Dorsolateral prefrontal cortex (tissue), 120 donors: ENCODE measurements at regions of chr11 and their contacts with region 1.

Region 1: GRCh38 chr11:9265211-9266131 is at the start of gene DENND5A:
- DNase-seq: peak; percentile 76 to 92 (median 85)
- H3K4me3 ChIP-seq: peak within 1 kb of the TSS; percentile 67 to 100 (median 92)
- H3K27ac ChIP-seq: peak within 1 kb of the TSS; percentile 73 to 98 (median 96)
- H3K27me3 ChIP-seq: no peaks in the 10 kb centered on the region
- CTCF ChIP-seq: peak in 38 of 56 donors; percentile 3 to 61 (median 40)
- total RNA-seq, gene DENND5A: 128 to 331 (median 174) TPM

Region 2: DNA sequence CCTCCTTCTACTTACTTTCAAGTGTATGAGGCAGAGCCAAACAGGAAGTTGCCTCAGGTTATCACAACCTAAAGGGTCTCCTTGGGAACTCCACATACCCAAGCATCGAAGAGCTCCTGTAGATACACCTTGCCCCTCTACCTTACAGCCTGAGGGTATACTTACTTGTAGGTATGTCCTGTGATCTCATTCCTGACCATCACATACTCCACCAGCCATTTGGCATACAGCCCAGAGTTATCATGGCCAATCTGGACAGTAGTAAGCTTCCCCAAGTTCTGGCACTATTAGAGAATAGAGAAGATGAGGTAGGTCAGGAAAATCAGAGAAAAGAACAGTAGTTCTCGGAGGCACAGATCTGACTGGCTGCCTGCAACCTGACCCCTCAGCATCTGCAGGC is 120.6 kb before region 1 on chr11:
- intact Hi-C with region 1: loop called in 1 of 2 experiments (anchors 5 kb)
- DNase-seq: peak in 1 of 10 donors; percentile 71
- H3K4me3 ChIP-seq: no peak overlapping the region
- H3K27ac ChIP-seq: peak overlapping the region in 45 of 59 donors; percentile 0 to 93 (median 77)
- H3K27me3 ChIP-seq: no peaks in the 10 kb centered on the region
- CTCF ChIP-seq: no peak

Region 3: GRCh38 chr11:9203691-9204311 is 61.7 kb before region 1 on chr11:
- intact Hi-C with region 1: loop called in 1 of 2 experiments (anchors 2 kb)
- DNase-seq: peak in 5 of 10 donors; percentile 14 to 70 (median 41)
- H3K4me3 ChIP-seq: peak overlapping the region in 1 of 59 donors; percentile 17
- H3K27ac ChIP-seq: peak overlapping the region in 51 of 59 donors; percentile 4 to 85 (median 60)
- H3K27me3 ChIP-seq: no peaks in the 10 kb centered on the region
- CTCF ChIP-seq: peak in 53 of 56 donors; percentile 17 to 67 (median 48)

Region 4: DNA sequence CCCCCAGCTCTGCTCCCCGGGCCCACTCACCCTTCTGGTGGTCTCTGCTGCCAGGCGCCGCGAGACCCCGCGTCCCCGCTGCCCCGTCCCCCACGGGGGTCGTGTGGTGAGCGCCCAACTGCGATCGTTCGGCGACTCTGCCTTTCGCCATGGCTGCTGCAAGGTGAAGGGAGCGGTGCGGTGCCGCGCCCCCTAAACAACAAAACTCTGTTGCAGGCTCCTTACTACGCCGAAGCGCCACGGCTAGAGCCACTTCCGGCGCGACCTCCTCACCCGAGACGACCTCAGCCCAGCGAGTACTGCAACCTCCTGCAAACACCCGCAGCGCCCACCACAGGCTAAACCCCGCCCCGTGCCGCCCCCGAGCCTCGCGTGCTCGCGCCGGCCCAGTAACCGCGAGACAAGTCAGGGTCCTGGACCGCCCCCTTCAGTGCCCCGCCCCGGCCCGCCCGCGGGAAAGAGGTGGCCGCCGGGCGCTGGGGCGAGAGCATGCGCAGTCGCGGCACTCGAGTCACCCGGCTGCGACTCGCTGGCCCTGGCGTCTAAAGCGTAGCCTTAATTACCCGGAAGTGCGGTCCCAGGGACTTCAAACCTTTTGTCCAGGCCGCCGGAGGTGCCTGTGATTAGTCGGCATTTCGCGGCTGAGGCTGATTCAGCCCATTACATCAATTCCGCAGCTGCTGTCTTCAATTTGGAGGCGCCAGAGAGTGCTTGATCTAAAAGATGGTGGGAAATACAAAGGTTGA is 49.0 kb after region 1 on chr11 and contains the start of gene TMEM41B:
- intact Hi-C with region 1: loop called (anchors 5 kb)
- DNase-seq: peak; percentile 91 to 99 (median 96)
- H3K4me3 ChIP-seq: peak within 1 kb of the TSS; percentile 67 to 100 (median 95)
- H3K27ac ChIP-seq: peak within 1 kb of the TSS; percentile 44 to 97 (median 90)
- H3K27me3 ChIP-seq: peaks cover 0 to 11% (median 0%) of the 10 kb centered on the region in 45 donors
- CTCF ChIP-seq: peak in 51 of 56 donors; percentile 1 to 67 (median 41)
- total RNA-seq, gene TMEM41B: 31.7 to 63.9 (median 42.1) TPM

Region 5: DNA sequence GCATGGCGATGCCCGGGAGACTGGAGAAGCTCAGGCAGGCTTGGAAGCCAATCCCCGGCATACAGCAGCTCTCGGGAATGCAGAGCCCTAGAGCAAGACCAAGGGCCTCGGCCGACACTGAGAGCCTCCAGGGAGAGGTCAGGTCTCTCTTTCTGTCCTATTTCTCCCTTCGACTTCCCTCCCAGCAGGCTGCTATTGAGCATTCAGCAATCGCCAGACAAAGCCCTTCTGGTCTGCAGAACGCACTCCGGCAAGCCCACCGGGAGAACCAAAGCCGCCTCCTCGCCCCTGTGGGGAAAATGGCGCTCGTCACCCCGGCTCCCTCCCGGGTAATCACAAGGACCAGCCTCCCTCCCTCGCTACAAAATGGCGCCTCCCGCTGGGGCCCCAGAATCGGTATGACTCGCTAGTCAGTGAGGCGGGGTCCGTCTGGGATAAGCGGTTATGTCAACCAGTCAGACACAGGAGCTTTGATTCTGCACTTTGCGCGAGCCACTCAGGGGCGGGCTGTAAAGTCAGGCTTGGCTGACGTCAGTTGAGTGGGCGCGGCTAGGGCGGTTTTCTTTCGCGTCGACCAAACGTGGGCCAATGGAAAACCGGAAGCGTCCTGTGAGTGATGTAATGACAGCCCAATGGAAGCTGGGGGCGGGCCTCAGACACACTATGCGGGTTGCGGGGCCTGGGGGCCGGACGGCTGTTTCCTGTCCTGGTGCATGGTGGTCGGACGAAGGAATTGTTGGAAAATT is 195.0 kb after region 1 on chr11 and contains the start of gene ZNF143:
- intact Hi-C with region 1: loop called in 1 of 2 experiments (anchors 10 kb)
- DNase-seq: peak; percentile 99 to 100 (median 100)
- H3K4me3 ChIP-seq: peak within 1 kb of the TSS; percentile 73 to 100 (median 94)
- H3K27ac ChIP-seq: peak within 1 kb of the TSS; percentile 96 to 100 (median 100)
- H3K27me3 ChIP-seq: no peaks in the 10 kb centered on the region
- CTCF ChIP-seq: peak in 11 of 56 donors; percentile 3 to 34 (median 18)
- total RNA-seq, gene ZNF143: 12.5 to 37.0 (median 22.4) TPM

Region 6: GRCh38 chr11:9784602-9785315 is 519.3 kb after region 1 on chr11:
- intact Hi-C with region 1: no loop called
- DNase-seq: no peak
- H3K4me3 ChIP-seq: no peak overlapping the region
- H3K27ac ChIP-seq: peak overlapping the region in 44 of 59 donors; percentile 2 to 73 (median 44)
- H3K27me3 ChIP-seq: no peaks in the 10 kb centered on the region
- CTCF ChIP-seq: no peak

Region 7: DNA sequence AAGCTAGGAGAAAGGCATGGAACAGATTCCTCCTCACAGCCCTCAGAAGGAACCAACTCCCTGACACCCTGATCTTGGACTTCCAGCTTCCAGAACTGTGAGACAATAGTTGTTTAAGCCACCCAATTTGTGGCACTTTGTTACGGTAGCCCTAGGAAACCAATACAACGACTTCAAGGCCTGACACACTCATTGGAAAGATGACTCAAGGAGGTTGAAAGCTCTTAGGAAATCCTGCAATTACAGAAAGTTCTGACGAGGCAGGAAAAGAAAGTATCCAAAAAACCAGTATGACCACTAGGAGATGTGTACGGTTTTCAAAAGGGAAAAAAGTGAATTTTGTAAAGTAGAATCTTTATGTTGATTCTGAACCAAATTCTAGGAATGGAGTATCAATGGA is 559.8 kb after region 1 on chr11:
- intact Hi-C with region 1: no loop called
- DNase-seq: no peak
- H3K4me3 ChIP-seq: no peak overlapping the region
- H3K27ac ChIP-seq: no peak overlapping the region
- H3K27me3 ChIP-seq: no peaks in the 10 kb centered on the region
- CTCF ChIP-seq: no peak